HEK293 (cell line): ENCODE measurements at regions of chr18 and their contacts with region 1.

Region 1: DNA sequence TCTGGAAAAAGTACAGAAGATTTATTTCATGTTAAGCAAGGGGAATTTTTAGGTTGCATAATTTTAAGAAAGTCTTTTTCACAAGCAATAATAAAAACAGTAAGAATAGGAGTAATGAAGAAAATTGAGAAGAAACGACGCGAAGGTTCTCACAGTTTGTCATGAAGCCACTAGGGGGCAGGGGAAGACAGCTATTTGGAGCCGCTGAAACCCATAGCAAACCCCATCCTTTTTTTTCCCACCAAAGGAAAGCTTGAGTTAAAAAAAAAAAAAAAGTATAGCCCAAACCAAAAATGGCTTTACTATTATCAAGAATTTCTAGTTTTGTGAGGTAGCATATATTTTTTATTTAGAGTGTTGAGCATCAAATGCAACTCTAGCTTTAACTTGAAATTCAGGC is 300.9 kb downstream of the PHLPP1 start:
- H3K4me3 ChIP-seq: no peak overlapping the region
- H3K27ac ChIP-seq: no peak overlapping the region
- H3K4me1 ChIP-seq: no peaks in the 10 kb centered on the region
- CTCF ChIP-seq: peak; percentile 32; the same call in 1 of the 2 replicates

Region 2: DNA sequence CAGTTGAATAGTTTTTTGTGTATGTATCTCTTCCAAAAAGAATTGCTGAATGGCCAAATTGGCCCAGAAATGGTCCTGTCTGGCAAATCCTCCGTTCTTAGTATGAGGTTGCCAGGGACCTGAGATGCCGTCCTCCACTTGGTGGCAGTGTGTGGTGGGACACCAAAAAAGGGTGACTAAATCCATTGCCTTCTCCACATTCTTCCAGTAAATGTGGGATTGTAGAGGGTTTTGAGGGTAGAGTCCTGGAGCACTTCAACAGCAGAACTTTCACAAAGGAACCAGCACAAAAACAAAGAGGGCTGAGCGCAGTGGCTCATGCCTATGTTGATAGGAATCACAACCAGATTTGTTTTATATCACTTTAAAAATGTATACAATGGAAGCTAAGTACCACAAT is 103.4 kb after region 1 on chr18:
- CTCF ChIA-PET with region 1: interaction called, 11 read pairs
- POLR2A ChIA-PET with region 1: no interaction called
- H3K4me3 ChIP-seq: no peak overlapping the region
- H3K27ac ChIP-seq: no peak overlapping the region
- H3K4me1 ChIP-seq: 0 out of 2 replicates have a peak, but pooled peaks cover 3% of the 10 kb centered on the region
- CTCF ChIP-seq: peak; percentile 62

Region 3: GRCh38 chr18:63131106-63131958 is 115.1 kb after region 1 on chr18:
- CTCF ChIA-PET with region 1: interaction called, 11 read pairs
- POLR2A ChIA-PET with region 1: interaction called, 7 read pairs
- H3K4me3 ChIP-seq: no peak overlapping the region
- H3K27ac ChIP-seq: no peak overlapping the region
- H3K4me1 ChIP-seq: no peaks in the 10 kb centered on the region
- CTCF ChIP-seq: peak; percentile 25; the same call in 1 of the 2 replicates

Region 4: GRCh38 chr18:63339920-63340484 is 323.7 kb after region 1 on chr18:
- CTCF ChIA-PET with region 1: interaction called, 51 read pairs
- POLR2A ChIA-PET with region 1: no interaction called
- H3K4me3 ChIP-seq: no peak overlapping the region
- H3K27ac ChIP-seq: no peak overlapping the region
- H3K4me1 ChIP-seq: no peaks in the 10 kb centered on the region
- CTCF ChIP-seq: 0 out of 2 replicates have a peak, but pooled peaks have one; percentile 14

Region 5: DNA sequence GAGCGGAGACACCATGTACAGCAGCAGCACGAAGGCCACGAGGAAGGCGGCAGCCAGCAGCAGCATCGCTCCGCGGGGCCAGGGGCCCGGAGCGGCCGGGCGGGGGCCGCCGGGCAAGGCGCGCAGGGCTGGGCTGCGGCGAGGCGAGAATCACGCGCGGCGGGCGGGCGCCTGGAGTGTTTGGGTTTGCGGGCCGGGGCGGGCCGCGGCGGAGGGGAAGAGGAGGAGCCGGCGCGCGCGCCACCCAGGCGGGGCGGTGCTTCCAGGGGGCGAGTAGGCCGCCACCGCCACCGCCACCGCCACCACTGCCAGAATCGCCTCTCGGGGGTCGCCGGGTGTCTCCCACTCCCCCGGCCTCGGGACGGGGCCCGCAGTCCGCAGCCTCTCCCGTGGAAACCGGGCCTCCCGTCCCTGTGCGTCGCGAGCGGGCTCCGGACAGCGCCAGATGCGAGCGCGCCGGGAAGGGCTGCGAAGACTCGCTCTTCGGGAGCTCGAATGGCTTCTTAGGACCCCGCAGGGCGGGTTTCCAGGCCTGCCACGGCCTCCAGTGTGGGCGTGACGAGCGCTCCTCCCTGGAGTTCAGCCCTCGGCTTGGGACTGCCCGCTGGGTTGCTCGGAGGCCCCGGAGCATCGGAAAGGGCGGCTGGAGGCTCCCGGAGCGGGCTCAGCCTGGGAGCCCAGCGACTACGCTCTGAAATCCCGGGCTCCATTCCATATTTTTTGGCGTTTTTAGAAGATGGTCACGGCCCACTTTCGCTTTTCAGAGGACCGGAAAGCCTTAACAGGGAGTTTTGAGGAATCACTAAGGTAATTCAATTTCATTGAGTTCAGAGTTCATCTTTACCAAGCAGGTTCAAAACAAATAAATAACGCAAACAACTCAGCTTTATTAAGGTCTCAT is 351.0 kb after region 1 on chr18 and contains the start of gene KDSR:
- CTCF ChIA-PET with region 1: interaction called, 12 read pairs
- POLR2A ChIA-PET with region 1: no interaction called
- H3K4me3 ChIP-seq: peak within 1 kb of the TSS; percentile 74
- H3K27ac ChIP-seq: peak within 1 kb of the TSS; percentile 95
- H3K4me1 ChIP-seq: peaks cover 7% of the 10 kb centered on the region; the same call in 1 of the 2 replicates
- CTCF ChIP-seq: peak; percentile 53